A549 (cell line): ENCODE measurements at regions of chr12 and their contacts with region 1.

Region 1: DNA sequence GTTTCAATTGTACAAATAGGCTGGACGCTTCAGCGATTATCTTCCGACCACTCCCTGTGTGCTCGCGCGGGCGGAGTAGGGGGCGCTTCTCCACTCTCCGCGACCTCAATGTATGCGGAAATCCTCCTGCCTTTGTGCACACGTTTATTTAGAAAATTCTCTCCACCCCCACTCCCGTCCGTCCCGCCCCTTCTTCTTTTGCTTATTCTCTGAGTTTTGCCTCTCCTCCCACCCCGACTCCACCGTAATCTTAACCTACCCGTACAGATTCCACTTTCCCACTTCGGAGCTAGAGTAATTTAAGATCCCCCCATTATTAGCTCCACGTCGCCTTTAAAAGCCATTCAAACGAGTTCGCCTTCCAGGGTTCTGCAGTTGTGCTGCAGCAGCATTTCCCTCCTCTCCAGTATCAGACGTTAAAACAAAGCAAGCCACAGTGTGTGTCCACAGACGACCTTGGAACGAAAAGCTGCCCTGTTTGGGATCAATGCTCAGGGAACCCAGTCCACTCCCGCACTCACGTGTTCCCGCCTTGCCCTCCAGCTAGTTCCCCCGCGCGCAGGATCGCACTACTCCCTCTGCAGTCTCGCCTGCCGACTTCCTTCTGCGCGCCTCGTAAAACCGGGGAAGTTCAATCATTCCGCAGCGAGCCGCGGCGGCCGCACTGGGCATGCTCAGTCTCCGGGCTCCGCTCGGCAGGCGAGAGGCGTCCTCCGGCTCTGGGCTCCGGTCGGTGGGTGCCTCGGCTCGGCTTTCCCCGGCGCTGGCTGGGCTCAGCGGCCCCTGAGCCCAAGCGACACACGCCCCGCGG is at the start of gene ANO6:
- DNase-seq: peak; percentile 83 to 93
- ATAC-seq: peak; percentile 91 to 94
- H3K4me3 ChIP-seq: peak within 1 kb of the TSS; percentile 89
- H3K27ac ChIP-seq: peak within 1 kb of the TSS; percentile 95 to 100
- H3K4me1 ChIP-seq: peaks cover 35% of the 10 kb centered on the region
- CTCF ChIP-seq: peak; percentile 54
- EP300 ChIP-seq: no peak
- POLR2A ChIP-seq: peak; percentile 89
- RAD21 ChIP-seq: peak; percentile 54 to 58
- polyA plus RNA-seq, gene ANO6: 80.0 and 85.4 TPM in 2 replicates

Region 2: GRCh38 chr12:45183246-45183645 is 32.4 kb before region 1 on chr12:
- CTCF ChIA-PET with region 1: interaction called, 17 read pairs
- POLR2A ChIA-PET with region 1: interaction called, 3 read pairs
- DNase-seq: peak; percentile 12 to 13
- ATAC-seq: peak in 1 of 2 experiments; percentile 54; a peak in 2 of 6 replicates
- H3K4me3 ChIP-seq: no peak overlapping the region
- H3K27ac ChIP-seq: no peak overlapping the region
- H3K4me1 ChIP-seq: no peaks in the 10 kb centered on the region
- CTCF ChIP-seq: peak; percentile 52
- EP300 ChIP-seq: no peak
- POLR2A ChIP-seq: no peak
- RAD21 ChIP-seq: peak; percentile 72 to 73

Region 3: GRCh38 chr12:45200491-45201043 is 15.1 kb before region 1 on chr12:
- CTCF ChIA-PET with region 1: interaction called, 11 read pairs
- POLR2A ChIA-PET with region 1: interaction called, 5 read pairs
- DNase-seq: no peak
- ATAC-seq: no peak
- H3K4me3 ChIP-seq: no peak overlapping the region
- H3K27ac ChIP-seq: no peak overlapping the region
- H3K4me1 ChIP-seq: no peaks in the 10 kb centered on the region
- CTCF ChIP-seq: no peak
- EP300 ChIP-seq: no peak
- POLR2A ChIP-seq: no peak
- RAD21 ChIP-seq: no peak

Region 4: DNA sequence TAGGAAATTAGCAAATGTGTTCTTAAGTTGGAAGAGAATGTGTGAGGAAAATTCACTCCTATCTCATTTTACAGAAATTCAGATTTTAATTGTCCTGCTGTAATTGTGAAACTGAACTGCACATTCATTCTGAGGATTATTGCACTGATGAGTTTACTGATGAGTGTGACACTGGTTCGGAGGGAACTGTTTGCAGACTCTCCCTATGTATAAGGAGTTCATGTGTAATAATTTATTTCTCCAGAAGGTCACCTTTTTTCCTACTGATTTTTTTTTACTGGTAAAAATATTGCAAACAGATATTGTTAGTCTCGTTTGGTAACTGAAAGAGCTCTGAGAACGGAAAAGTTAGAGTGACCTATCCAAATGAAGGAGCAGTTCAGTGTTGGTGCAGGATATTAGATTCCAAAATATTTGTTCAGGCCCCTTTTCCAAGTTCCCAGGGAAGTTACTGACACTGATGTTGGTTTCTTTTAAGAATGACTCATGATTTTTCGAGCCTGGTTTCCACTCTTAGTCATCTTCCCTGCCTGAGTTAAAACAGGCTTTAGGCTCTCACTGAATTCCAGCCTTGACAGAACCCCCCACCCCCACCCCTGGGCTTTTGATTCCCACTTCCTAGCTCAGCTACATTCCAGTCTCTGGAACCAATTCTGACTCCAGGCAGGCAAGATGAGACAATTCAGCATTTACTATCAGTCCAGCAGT is 18.7 kb after region 1 on chr12:
- CTCF ChIA-PET with region 1: interaction called, 31 read pairs
- POLR2A ChIA-PET with region 1: interaction called, 40 read pairs
- DNase-seq: peak; percentile 84 to 91
- ATAC-seq: peak; percentile 77 to 79
- H3K4me3 ChIP-seq: peak overlapping the region; percentile 7; the same call in 1 of the 3 replicates
- H3K27ac ChIP-seq: peak overlapping the region; percentile 84 to 85
- H3K4me1 ChIP-seq: peaks cover 50% of the 10 kb centered on the region
- CTCF ChIP-seq: no peak
- EP300 ChIP-seq: peak in 1 of 2 experiments; percentile 66; a peak in 1 of 5 replicates
- POLR2A ChIP-seq: no peak
- RAD21 ChIP-seq: peak; percentile 18 to 39; a peak in 3 of 5 replicates

Region 5: DNA sequence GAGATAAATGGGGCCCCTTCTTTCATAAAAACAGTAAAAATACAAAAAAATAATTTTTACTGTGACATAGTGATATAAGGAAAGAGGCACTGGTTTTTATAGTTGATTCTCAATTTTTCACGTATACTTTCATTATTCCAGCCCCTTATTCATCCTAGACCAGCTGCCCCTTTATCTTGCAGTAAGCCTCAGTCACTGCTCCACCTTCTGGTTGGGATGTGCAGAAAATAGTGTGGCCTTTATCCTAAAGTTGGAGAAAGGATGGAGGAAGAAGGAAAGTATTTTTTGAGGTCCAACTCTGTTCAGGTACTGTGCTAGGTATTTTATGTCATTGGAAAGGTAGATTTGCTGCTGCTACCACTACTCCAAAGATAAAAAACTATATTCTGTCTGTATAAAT is 172.9 kb after region 1 on chr12:
- CTCF ChIA-PET with region 1: interaction called, 31 read pairs
- POLR2A ChIA-PET with region 1: interaction called, 3 read pairs
- DNase-seq: peak; percentile 51 to 54
- ATAC-seq: peak; percentile 82 to 89
- H3K4me3 ChIP-seq: no peak overlapping the region
- H3K27ac ChIP-seq: no peak overlapping the region
- H3K4me1 ChIP-seq: no peaks in the 10 kb centered on the region
- CTCF ChIP-seq: peak; percentile 78
- EP300 ChIP-seq: no peak
- POLR2A ChIP-seq: no peak
- RAD21 ChIP-seq: peak; percentile 74 to 84